ENCODE measurements at regions of chr11 and their contacts with region 1.

Region 1: DNA sequence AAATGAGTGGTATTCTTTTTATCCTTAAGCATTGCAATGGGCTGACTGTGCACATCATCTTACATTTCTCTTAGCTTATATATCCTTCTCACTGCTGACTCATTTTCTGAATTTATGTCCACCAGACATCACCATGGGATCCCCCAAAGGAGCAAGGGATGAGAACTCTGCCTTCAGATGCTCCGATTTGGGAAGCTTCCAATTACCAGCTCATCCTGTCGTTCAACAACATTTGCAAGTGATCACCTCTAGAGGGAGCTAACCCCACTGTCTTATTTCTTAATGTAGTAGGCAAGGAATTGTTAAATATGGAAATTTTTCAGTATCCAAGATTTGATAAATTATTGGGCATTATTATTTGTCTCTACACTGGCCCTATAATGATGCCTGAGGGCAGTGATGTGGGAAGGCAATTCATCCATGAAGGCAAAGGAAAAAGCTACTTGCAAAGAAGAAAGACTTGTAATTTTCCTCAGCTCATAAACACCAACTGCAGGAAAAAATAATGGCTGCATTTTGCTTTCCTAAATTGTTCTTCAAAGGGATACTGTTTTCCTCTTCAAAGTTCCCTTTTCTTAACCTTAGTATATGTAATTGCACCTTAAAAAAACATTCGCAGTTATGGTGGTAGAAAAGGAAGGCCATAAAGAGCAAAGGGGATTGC is 102.4 kb upstream of the FSHB start:
- DNase-seq: peak; percentile 20
- H3K4me3 ChIP-seq: no peak overlapping the region; a peak in 1 of 4 replicates
- H3K27ac ChIP-seq: no peak overlapping the region
- H3K4me1 ChIP-seq: no peaks in the 10 kb centered on the region
- H3K27me3 ChIP-seq: no peaks in the 10 kb centered on the region
- CTCF ChIP-seq: peak; percentile 85
- EP300 ChIP-seq: no peak
- RAD21 ChIP-seq: peak; percentile 58

Region 2: DNA sequence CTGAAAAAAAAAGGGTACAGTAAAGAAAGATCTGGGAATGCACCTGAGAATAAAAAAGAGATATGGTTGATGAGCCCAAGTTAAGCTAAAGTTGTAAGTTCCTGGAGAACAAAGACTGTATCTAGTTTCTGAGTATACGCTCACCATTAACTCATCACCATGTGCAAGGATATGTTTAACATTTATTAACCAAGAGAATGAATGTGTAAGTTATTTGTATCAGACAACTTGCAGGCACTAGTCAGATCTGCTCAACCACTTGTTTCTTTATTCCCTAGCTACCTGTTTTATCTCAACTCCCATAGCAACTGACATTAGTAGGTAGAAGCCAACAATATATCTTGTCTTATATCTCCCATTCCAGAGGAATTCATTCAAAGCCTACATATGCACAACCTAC is 36.7 kb before region 1 on chr11:
- CTCF ChIA-PET with region 1: interaction called, 10 read pairs
- POLR2A ChIA-PET with region 1: no interaction called
- DNase-seq: no peak
- H3K4me3 ChIP-seq: no peak overlapping the region
- H3K27ac ChIP-seq: no peak overlapping the region
- H3K4me1 ChIP-seq: no peaks in the 10 kb centered on the region
- H3K27me3 ChIP-seq: no peaks in the 10 kb centered on the region
- CTCF ChIP-seq: no peak
- EP300 ChIP-seq: no peak
- RAD21 ChIP-seq: no peak

Region 3: DNA sequence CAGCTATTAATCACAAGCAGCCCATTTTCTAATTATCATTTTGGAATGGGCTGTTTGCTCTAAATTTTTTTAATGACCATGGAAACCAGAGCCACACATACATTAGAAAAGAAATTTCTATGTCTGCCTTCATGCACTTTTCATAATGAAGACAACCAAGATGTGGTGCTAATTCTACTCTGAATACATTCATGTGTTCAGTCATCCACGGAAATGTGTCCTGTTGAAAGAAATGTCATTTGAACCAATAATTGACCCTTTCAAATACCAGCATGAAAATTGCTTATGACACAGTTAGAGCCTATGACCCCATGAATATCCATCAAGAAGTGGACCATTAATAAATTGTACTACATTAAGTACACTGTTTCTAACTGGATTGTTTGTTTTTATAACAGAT is 11.9 kb before region 1 on chr11:
- CTCF ChIA-PET with region 1: interaction called, 15 read pairs
- POLR2A ChIA-PET with region 1: no interaction called
- DNase-seq: no peak
- H3K4me3 ChIP-seq: no peak overlapping the region
- H3K27ac ChIP-seq: no peak overlapping the region
- H3K4me1 ChIP-seq: no peaks in the 10 kb centered on the region
- H3K27me3 ChIP-seq: no peaks in the 10 kb centered on the region; the same call in 1 of the 2 replicates
- CTCF ChIP-seq: no peak
- EP300 ChIP-seq: no peak
- RAD21 ChIP-seq: no peak

Region 4: DNA sequence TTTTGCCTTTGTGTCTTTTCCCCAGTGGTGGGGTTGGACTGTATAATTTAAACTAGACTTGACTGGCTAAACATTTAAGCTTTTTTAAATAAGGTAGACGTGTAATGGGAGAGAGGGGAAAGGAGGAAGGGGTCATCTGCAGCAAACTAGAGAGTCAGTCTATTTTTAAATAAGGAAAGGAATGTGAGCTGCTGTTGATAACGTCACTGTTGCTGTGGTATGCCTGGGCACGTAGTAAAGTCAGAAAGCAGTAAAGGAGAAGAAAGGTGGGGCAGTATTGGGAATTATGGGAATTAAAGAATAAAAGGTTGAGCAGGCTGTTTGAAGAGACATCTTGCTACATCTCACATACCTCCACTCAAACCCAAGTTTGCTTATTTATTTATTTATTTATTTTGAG is 22.0 kb after region 1 on chr11:
- CTCF ChIA-PET with region 1: interaction called, 128 read pairs
- POLR2A ChIA-PET with region 1: no interaction called
- DNase-seq: no peak
- H3K4me3 ChIP-seq: no peak overlapping the region
- H3K27ac ChIP-seq: no peak overlapping the region
- H3K4me1 ChIP-seq: no peaks in the 10 kb centered on the region
- H3K27me3 ChIP-seq: no peaks in the 10 kb centered on the region
- CTCF ChIP-seq: no peak
- EP300 ChIP-seq: no peak
- RAD21 ChIP-seq: no peak

Region 5: DNA sequence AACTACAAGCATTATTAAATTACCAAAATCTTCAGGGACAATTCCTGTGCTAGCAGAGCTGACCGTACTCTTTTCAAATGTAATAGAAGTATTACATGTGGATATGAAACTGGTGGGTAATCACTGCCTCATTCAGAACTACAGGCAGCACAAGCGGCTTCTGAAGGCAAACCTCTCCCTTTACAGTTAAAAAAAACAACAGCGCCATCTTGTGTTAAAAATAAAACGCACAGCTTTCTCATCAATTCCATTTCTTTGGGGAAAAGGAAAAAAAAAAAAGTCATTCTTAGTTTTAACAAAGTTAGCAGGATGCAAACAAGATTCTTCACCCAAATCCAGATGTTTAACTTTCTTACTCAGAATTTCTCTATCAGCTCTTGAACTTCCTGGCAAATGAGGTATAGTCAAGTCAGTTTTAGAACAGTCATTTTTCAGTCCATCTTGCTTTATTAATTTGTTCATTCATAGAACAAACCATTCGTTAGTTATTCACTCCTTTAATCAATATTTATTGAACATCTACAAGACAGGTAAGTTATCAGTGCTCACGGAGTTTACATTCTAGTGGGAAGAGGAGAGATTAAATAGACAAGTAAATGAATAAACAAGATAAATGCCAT is 789.6 kb after region 1 on chr11:
- CTCF ChIA-PET with region 1: interaction called, 16 read pairs
- POLR2A ChIA-PET with region 1: no interaction called
- DNase-seq: peak; percentile 36
- H3K4me3 ChIP-seq: no peak overlapping the region
- H3K27ac ChIP-seq: no peak overlapping the region
- H3K4me1 ChIP-seq: peaks cover 0 to 5% of the 10 kb centered on the region in 2 experiments; a peak in 2 of 4 replicates
- H3K27me3 ChIP-seq: no peaks in the 10 kb centered on the region
- CTCF ChIP-seq: peak; percentile 83
- EP300 ChIP-seq: no peak
- RAD21 ChIP-seq: peak; percentile 91